Activated CD4-positive, alpha-beta memory T cell treated with anti-CD3 and anti-CD28 coated beads for 36 hours (primary cell): ENCODE measurements at regions of chrX and their contacts with region 1.

Region 1: DNA sequence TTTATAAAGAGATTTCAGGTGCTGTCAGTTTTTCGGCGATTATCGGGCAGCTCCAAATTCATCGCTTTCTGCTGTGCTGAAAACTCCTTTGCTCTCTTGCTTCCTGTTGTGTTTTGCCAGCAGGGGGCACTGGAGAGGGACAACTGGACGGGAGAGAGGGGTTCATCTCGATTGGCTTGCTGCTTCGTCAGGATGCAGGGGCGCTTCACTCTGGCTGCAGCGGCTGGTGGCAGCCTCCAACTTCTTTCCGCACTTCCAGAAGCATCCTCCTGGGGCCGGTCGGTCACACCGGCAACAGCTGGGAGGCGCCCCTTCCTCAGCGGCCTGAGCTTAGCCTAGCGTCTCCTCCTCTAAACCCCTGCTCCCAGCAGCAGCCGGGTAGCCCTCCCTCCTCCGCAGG is 29.5 kb downstream of the MSL3 start:
- DNase-seq: peak; percentile 82
- H3K4me3 Mint-ChIP-seq: peak overlapping the region; percentile 43
- H3K27ac Mint-ChIP-seq: no peak overlapping the region
- H3K4me1 Mint-ChIP-seq: peaks cover 15% of the 10 kb centered on the region
- H3K27me3 Mint-ChIP-seq: no peaks in the 10 kb centered on the region

Region 2: GRCh38 chrX:11908371-11908770 is 120.8 kb after region 1 on chrX:
- CTCF ChIA-PET with region 1: interaction called, 4 read pairs
- POLR2A ChIA-PET with region 1: no interaction called
- intact Hi-C with region 1: loop called (anchors 1 kb)
- DNase-seq: peak; percentile 15
- H3K4me3 Mint-ChIP-seq: no peak overlapping the region
- H3K27ac Mint-ChIP-seq: no peak overlapping the region
- H3K4me1 Mint-ChIP-seq: no peaks in the 10 kb centered on the region
- H3K27me3 Mint-ChIP-seq: peaks cover 2% of the 10 kb centered on the region